Heart right ventricle (tissue), 16 donors: ENCODE measurements at regions of chr12 and their contacts with region 1.

Region 1: DNA sequence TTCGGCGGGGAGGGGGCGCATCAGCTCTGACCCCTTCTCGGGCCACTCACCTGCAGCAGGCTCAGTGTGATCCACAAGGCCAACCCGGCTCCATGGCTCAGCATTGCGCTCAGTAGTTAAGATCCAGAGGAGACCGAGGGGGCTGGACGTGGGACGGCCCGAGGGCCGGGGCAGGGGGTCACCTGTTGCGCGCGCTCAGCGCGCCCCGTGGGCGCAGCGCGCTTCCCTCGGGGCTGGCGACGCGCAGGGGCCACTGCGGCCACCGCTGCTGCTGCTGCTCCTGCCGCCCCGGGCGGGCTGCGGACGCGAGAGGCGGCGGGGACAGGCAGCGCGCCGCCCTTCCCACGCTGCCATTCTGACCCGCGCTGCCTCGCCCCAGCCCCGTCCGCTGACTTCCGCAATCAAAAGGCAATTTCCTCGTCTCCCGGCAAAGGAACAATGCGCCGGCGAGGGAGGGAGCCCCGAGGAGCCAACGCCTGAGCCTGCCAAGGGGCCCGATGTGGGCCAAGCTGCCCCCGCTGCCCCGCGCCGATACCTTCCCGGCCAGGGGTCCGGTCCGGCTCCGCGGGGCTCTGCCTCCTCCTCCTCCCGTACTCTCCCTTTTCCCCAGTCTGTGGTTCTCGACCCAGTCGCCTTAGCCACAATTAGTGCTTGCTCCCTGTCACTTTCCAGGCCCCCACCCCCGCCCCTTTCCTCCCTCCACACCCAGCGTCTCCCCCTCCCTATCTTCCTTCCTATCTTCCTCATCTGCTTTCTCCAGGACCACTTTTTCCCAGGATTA is 27.3 kb downstream of the PTPRB start:
- DNase-seq: peak; percentile 64 to 74
- ATAC-seq: peak; percentile 84 to 94 (median 88)
- H3K4me3 ChIP-seq: peak overlapping the region; percentile 42 to 69 (median 60)
- H3K27ac ChIP-seq: peak overlapping the region; percentile 68 to 90 (median 83)
- H3K4me1 ChIP-seq: peaks cover 0 to 57% (median 8%) of the 10 kb centered on the region in 9 donors
- H3K27me3 ChIP-seq: peaks cover 0 to 49% (median 19%) of the 10 kb centered on the region in 7 donors
- CTCF ChIP-seq: no peak

Region 2: GRCh38 chr12:70660620-70661219 is 50.8 kb after region 1 on chr12:
- intact Hi-C with region 1: loop called in 3 of 10 experiments (anchors 10 kb)
- DNase-seq: peak; percentile 21 to 61
- ATAC-seq: peak; percentile 61 to 91 (median 78)
- H3K4me3 ChIP-seq: peak overlapping the region in 1 of 10 donors; percentile 15
- H3K27ac ChIP-seq: peak overlapping the region in 7 of 10 donors; percentile 6 to 70 (median 60)
- H3K4me1 ChIP-seq: peaks cover 0 to 35% (median 14%) of the 10 kb centered on the region in 9 donors
- H3K27me3 ChIP-seq: no peaks in the 10 kb centered on the region
- CTCF ChIP-seq: no peak